Left cardiac atrium (tissue), 4 donors: ENCODE measurements at regions of chr5 and their contacts with region 1.

Region 1: DNA sequence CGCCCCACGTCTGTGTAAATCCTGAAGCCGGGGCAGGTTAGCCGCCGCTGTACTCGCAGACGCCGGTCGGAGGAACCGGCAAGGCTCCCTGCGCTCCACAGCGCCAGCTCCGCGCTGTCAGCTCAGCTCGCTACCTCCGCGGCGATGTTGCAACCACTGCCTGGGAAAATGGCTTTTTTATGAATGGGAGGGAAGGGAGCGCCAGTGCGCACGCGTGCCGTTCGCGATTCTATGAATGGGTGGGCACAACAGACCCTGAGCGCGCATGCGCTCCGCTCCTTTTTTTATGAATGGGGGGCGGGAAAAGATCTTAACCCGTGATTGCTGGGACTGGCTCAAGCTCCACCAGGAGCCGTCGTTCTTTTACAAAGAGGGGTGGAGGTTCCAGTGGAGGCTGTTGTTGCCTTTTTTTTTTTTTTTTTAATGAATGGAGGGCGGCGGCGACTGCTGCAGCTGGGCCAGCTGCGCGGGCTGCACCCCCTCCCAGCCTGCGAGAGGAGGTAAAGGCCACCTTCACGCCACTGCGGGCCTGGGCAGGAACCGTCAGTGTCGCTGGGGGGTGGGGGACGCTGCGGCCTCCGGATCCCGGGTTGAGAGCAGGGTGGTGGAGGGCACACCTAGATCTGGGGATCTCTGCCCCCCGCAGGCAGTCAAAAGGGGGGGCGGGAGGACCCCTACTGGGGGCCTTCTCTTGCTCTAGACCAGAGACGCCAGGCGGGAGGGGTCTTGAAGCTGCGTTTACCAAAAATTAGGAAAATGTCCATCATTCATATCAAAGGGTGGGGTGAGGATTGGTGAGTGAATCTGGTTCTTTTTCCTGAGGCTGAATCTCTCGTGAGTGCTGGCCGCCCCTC is at the start of gene SPRY4:
- DNase-seq: peak; percentile 95
- ATAC-seq: peak; percentile 82 to 85
- total RNA-seq, gene SPRY4: 13.3 to 30.6 TPM

Region 2: DNA sequence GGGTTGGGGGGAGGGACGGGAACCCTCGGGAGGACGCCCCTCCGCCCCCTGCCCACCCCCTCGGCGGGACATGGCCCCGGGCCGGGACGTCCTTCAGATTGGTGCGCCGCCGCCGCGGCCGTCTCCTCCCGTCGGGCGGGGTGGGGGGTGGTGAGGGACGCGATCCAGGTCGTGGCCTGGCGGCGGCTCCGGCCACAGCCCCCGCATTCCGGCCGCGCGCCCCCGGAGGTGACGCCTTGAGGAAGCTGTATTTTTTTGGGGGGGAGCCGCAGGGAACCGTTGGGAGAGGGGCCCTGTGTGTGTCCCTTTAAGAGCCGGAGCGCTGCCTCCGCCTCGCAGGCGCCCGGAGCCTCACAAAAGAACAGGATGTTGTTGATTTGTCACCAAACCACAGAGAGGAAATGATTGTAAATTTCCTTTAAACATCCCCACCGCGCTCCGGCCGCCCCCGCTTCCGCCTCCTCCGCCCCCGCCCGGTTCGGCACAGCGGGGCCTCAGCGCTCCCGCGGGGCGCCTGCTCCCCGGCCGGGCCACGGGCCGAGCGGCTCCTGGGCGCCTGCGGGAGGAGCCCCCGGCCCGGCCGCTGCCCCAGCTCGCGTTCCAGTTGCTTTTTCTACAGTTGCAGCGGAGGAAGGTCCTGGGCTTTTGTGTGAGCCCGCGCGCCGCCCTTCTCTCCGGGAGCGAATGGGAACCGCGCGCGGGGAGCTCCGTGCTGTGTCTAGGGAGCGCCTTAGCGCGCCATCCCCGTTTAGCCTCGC is 31.8 kb after region 1 on chr5:
- intact Hi-C with region 1: loop called in 1 of 2 experiments (anchors 5 kb)
- DNase-seq: peak; percentile 91
- ATAC-seq: peak; percentile 87 to 92